Transverse colon (tissue), 4 donors: ENCODE measurements at regions of chr3 and their contacts with region 1.

Region 1: GRCh38 chr3:52391096-52391495 is 53.8 kb downstream of the SEMA3G start:
- DNase-seq: no peak
- H3K4me3 ChIP-seq: no peak overlapping the region
- H3K27ac ChIP-seq: no peak overlapping the region
- H3K4me1 ChIP-seq: no peaks in the 10 kb centered on the region
- H3K27me3 ChIP-seq: no peaks in the 10 kb centered on the region
- CTCF ChIP-seq: no peak
- EP300 ChIP-seq: no peak
- POLR2A ChIP-seq: no peak

Region 2: GRCh38 chr3:50674349-50675178 is 1716.5 kb before region 1 on chr3 and contains the start of gene DOCK3:
- in situ Hi-C with region 1: no loop called
- intact Hi-C with region 1: no loop called
- DNase-seq: peak; percentile 55
- H3K4me3 ChIP-seq: peak within 1 kb of the TSS; percentile 22 to 47 (median 40)
- H3K27ac ChIP-seq: no peak within 1 kb of the TSS
- H3K4me1 ChIP-seq: peaks cover 0 to 14% (median 11%) of the 10 kb centered on the region in 4 donors
- H3K27me3 ChIP-seq: peaks cover 85% of the 10 kb centered on the region
- CTCF ChIP-seq: no peak
- EP300 ChIP-seq: no peak
- POLR2A ChIP-seq: no peak
- total RNA-seq, gene DOCK3: 0.41 to 0.75 (median 0.62) TPM

Region 3: DNA sequence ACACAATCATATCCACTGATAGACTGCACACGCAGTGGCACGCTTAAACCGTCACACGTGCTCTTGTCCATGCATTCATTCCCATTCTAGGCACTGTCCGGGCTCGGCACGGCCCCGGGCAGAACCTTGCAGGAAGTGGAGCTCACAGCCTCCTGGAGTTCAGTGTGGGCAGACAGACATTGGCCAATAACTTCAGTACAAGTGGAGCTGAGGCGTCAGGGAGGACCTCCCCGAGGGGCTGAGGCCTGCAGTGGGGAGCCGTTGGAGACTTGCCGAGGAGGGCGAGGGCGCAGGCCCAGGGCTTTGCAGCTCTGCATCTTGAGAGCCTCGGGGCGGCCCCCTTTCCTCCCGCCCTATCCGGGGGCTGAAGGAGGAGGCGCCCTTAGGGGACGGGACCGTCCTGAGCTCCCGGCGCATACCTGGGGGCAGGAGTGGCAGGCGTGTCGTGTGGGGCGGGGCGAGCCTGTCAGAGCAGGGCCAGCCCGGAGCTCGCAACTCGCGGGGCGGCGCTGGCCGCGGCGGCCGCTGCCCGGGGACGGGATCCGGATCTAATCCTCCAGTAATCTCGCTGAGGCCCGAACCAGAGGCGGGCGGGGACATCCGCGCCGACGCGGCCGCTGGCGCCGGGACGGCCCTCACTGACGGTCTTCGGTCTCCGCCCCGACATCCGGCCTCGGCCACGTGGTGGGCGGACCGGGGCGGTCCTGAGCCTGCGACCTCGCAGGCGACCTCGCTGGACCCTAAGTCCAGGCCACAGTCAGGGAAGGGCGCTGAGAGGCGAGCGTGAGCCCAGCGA is 408.1 kb before region 1 on chr3 and contains the start of gene ACY1:
- in situ Hi-C with region 1: no loop called
- intact Hi-C with region 1: no loop called
- DNase-seq: peak; percentile 92
- H3K4me3 ChIP-seq: peak within 1 kb of the TSS; percentile 33 to 61 (median 50)
- H3K27ac ChIP-seq: peak within 1 kb of the TSS; percentile 89 to 99 (median 96)
- H3K4me1 ChIP-seq: peaks cover 18 to 48% (median 35%) of the 10 kb centered on the region in 4 donors
- H3K27me3 ChIP-seq: no peaks in the 10 kb centered on the region
- CTCF ChIP-seq: peak in 2 of 5 experiments; percentile 10 to 40
- EP300 ChIP-seq: no peak
- POLR2A ChIP-seq: peak; percentile 90
- total RNA-seq, gene ACY1: 165 to 426 (median 250) TPM

Region 4: DNA sequence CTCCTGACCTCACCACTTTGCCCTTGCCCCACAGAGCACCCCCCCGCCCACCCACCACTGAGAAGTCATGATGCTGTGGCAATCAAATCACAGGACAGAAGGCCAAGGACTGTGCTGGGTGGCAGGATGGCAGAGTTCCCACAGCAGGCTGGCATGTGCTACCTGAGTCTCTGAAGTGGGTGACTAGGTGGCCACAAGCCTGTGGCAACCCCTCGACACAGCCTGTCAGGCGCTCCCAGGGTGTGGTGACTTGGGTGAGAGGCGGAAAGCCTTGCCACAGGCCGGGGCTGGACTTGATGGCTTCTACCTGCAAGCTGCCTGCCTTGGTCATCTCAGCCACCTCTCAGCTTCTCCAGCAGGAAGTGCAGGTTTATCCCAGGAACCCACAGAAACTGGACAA is 319.1 kb before region 1 on chr3:
- in situ Hi-C with region 1: no loop called
- intact Hi-C with region 1: loop called (anchors 2 kb)
- DNase-seq: no peak
- H3K4me3 ChIP-seq: no peak overlapping the region
- H3K27ac ChIP-seq: no peak overlapping the region
- H3K4me1 ChIP-seq: peaks cover 0 to 12% (median 0%) of the 10 kb centered on the region in 4 donors
- H3K27me3 ChIP-seq: no peaks in the 10 kb centered on the region
- CTCF ChIP-seq: no peak
- EP300 ChIP-seq: no peak
- POLR2A ChIP-seq: no peak

Region 5: GRCh38 chr3:52649461-52650210 is 258.5 kb after region 1 on chr3:
- in situ Hi-C with region 1: no loop called
- intact Hi-C with region 1: no loop called
- DNase-seq: no peak
- H3K4me3 ChIP-seq: no peak overlapping the region
- H3K27ac ChIP-seq: no peak overlapping the region
- H3K4me1 ChIP-seq: no peaks in the 10 kb centered on the region
- H3K27me3 ChIP-seq: no peaks in the 10 kb centered on the region
- CTCF ChIP-seq: no peak
- EP300 ChIP-seq: no peak
- POLR2A ChIP-seq: no peak